ENCODE measurements at regions of chr2 and their contacts with region 1.

Region 1: GRCh38 chr2:216379977-216380376 is 7.7 kb upstream of the MARCHF4 start:
- DNase-seq: no peak
- ATAC-seq: no peak
- H3K4me3 ChIP-seq: no peak overlapping the region
- H3K27ac ChIP-seq: no peak overlapping the region
- H3K4me1 ChIP-seq: no peaks in the 10 kb centered on the region
- H3K27me3 ChIP-seq: no peaks in the 10 kb centered on the region
- CTCF ChIP-seq: no peak
- EP300 ChIP-seq: no peak
- POLR2A ChIP-seq: no peak
- RAD21 ChIP-seq: no peak

Region 2: GRCh38 chr2:216362730-216363129 is 17.2 kb before region 1 on chr2:
- CTCF ChIA-PET with region 1: no interaction called
- POLR2A ChIA-PET with region 1: no interaction called
- in situ Hi-C with region 1: no loop called
- intact Hi-C with region 1: loop called (anchors 1 kb)
- DNase-seq: no peak
- ATAC-seq: no peak
- H3K4me3 ChIP-seq: no peak overlapping the region
- H3K27ac ChIP-seq: no peak overlapping the region
- H3K4me1 ChIP-seq: no peaks in the 10 kb centered on the region
- H3K27me3 ChIP-seq: peaks cover 0 to 3% of the 10 kb centered on the region in 2 experiments; a peak in 1 of 5 replicates
- CTCF ChIP-seq: no peak
- EP300 ChIP-seq: no peak
- POLR2A ChIP-seq: no peak
- RAD21 ChIP-seq: no peak

Measured in HepG2 (cell line).